PC-9 (cell line): ENCODE measurements at regions of chr5 and their contacts with region 1.

Region 1: DNA sequence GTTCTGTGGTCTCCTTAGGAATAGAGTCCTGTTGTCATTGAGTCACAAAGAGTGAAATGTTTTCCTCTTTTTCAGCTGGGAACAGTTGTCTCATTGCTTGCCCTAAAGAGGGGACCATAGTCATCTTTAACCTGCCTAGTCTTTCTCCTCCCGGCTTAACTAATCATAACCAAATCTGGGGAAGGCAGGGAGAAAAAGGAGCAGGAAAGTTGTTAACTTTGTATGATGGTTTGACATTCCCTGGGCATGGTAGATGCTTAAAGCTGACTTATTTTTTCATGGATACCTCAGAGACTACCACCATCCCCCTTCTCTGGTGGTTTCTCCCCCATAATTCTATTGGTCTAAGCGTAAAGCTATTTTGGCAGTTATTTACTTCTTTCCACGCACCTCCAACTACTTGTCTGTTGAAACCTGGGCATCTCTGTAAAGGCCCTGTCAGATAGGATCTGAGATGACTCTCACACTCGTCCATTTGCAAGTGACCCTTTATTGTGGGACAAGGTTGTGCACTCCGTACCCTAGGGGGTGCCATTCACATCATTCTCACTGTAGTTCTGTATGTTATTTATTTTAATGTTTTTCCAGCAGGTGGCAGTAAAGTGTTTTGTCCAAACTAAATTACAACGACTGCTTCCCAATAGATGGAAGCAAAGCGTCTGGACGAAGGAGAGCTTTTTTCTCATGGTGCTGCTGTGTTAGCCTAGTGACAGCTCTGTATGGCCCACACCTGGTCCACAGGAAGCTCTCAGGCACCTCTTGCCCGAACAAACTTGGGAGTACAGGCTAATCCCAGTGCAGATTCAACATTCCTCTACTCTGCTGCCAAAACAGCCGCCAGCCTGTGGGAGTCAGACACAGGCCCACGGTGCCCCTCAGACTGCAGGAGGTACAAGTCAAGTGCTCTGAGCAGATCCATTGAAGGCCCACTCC is 3.0 kb upstream of the FAM13B start:
- DNase-seq: peak; percentile 55 to 79
- H3K4me3 ChIP-seq: no peak overlapping the region
- H3K27ac ChIP-seq: no peak overlapping the region
- H3K4me1 ChIP-seq: peaks cover 20% of the 10 kb centered on the region
- H3K27me3 ChIP-seq: no peaks in the 10 kb centered on the region
- CTCF ChIP-seq: peak; percentile 87

Region 2: GRCh38 chr5:137933491-137933911 is 102.4 kb before region 1 on chr5:
- CTCF ChIA-PET with region 1: no interaction called
- POLR2A ChIA-PET with region 1: interaction called, 10 read pairs
- intact Hi-C with region 1: no loop called
- DNase-seq: no peak
- H3K4me3 ChIP-seq: no peak overlapping the region
- H3K27ac ChIP-seq: no peak overlapping the region
- H3K4me1 ChIP-seq: no peaks in the 10 kb centered on the region
- H3K27me3 ChIP-seq: no peaks in the 10 kb centered on the region
- CTCF ChIP-seq: no peak

Region 3: GRCh38 chr5:138011991-138012390 is 23.9 kb before region 1 on chr5:
- CTCF ChIA-PET with region 1: interaction called, 17 read pairs
- POLR2A ChIA-PET with region 1: no interaction called
- intact Hi-C with region 1: no loop called
- DNase-seq: peak in 1 of 2 experiments; percentile 66
- H3K4me3 ChIP-seq: no peak overlapping the region
- H3K27ac ChIP-seq: no peak overlapping the region
- H3K4me1 ChIP-seq: peaks cover 10% of the 10 kb centered on the region; the same call in 1 of the 2 replicates
- H3K27me3 ChIP-seq: no peaks in the 10 kb centered on the region
- CTCF ChIP-seq: no peak

Region 4: DNA sequence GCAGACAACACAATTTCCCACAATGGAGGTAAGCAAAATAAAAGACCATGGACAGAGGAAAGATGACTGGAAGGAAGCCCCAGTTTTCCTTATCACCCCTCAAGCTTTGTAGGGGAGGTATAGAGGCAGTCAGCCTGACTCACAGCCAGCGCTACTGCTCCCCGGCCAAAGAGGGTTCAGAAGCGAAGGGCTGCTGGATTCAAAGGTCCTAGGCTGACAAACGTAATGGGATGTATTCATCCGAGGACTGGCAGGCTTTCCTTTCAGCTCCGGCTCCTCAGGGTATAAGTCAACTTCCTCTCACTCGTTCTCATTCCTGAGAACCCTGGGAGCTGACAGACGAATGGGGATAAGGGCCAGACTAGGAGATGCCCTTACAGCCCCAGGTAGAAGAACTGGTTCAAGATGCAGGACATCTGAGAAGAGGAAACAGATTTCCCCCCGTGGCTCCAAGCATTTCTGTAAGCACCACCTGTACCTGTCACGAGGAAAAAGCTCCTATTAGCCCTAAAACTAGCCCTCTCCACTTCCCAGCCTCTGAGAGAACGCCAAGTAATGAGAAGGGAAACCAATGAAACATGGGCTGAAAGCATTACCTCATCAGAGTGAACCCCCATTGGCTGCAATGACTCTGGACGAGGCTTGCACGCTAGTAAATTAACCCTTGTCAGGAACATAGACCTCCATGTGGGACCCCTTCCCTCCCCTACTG is 19.1 kb after region 1 on chr5:
- CTCF ChIA-PET with region 1: no interaction called
- POLR2A ChIA-PET with region 1: no interaction called
- intact Hi-C with region 1: no loop called
- DNase-seq: no peak
- H3K4me3 ChIP-seq: no peak overlapping the region
- H3K27ac ChIP-seq: no peak overlapping the region
- H3K4me1 ChIP-seq: no peaks in the 10 kb centered on the region
- H3K27me3 ChIP-seq: no peaks in the 10 kb centered on the region
- CTCF ChIP-seq: no peak